Psoas muscle (tissue), 8 donors: ENCODE measurements at regions of chr9 and their contacts with region 1.

Region 1: DNA sequence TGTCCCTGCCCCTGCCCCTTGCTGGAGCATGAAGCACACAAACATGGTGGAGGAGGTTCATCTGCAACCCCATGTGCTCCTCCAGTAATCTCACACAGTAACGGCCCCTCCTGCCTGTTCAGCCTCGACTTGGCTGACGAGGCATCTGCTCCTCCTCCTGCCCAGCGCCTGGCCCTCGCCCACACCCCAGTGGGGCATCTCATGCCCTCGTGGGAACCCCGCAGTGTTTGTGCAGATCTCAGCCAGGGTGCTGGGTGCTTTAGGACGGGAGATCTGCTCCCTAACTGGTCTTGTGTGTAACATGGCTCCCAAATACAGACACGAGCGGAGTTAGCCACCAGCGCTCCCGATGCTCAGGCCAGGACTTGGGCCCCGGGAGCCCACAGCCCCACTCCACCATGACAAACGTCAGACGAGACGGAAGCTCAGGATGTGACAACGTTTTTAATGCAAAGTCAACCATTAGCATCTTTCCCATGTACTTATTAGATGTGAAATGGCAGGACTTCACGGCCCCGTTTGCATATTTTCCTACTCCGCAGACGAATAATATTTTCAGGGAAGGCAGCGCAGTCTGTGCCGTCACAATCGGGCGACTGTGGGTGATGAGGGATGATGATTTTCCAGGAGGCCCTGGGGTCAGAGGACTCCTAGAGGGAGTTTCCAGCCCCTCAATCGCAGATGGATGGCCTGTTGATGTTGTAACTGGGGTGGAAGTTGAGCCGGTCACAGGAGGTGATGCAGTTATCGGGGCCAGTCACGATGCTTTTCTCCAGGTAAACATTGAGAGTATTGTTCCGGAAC is 5.5 kb upstream of the MRPS2 start:
- DNase-seq: no peak
- ATAC-seq: no peak
- H3K4me3 ChIP-seq: no peak overlapping the region
- H3K27ac ChIP-seq: no peak overlapping the region
- H3K4me1 ChIP-seq: no peaks in the 10 kb centered on the region
- H3K27me3 ChIP-seq: no peaks in the 10 kb centered on the region
- CTCF ChIP-seq: no peak

Region 2: GRCh38 chr9:135507421-135508035 is 12.6 kb after region 1 on chr9:
- intact Hi-C with region 1: loop called in 1 of 2 experiments (anchors 1 kb)
- DNase-seq: no peak
- ATAC-seq: no peak
- H3K4me3 ChIP-seq: no peak overlapping the region
- H3K27ac ChIP-seq: no peak overlapping the region
- H3K4me1 ChIP-seq: no peaks in the 10 kb centered on the region
- H3K27me3 ChIP-seq: peaks cover 0 to 4% (median 0%) of the 10 kb centered on the region in 3 donors
- CTCF ChIP-seq: no peak